ENCODE measurements at regions of chr2 and their contacts with region 1.

Region 1: DNA sequence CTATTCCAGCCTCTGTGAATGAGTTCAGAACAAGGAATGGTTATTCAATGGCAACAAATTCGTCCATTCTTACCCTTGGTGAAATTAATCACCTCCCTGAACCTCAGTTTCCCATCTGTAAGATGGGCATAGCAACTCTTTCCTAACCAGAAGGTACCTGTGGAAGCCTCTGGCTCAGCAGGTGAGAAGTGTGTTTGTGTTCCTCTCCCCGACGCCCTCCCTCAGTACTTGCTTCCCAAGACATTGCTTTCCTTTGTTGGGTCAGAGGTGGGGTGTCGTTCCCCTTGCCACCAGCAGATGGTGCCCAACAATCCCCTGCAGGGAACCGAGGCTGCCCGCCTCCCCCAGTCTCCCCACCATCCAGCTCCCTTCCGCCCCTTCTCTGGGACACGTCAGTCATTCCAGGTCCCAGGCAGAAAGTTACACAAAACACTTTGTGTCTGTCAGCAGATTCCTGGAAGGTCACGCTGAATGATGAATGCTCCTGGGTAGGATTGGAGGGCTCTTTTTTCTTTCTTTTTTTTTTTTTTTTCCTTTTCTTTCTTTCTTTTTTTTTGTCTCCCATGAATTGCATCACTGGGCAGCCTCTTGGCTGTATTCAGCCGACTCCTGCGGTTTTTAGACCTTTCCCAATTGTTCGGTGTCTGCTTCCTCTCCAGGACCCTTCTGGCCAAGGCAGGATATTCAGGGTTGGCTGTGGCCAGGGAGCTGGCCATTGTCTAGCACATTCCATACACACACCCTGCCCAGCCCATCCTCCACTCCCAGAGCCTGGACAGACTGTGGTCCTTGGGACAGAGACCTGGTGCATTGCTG is 117.3 kb downstream of the LPIN1 start:
- DNase-seq: peak; percentile 84 to 89
- ATAC-seq: peak; percentile 91 to 96 (median 94)
- H3K4me3 ChIP-seq: peak overlapping the region in 5 of 10 donors; percentile 11 to 31 (median 16)
- H3K27ac ChIP-seq: peak overlapping the region in 9 of 10 donors; percentile 45 to 77 (median 49)
- H3K4me1 ChIP-seq: peaks cover 0 to 23% (median 13%) of the 10 kb centered on the region in 9 donors
- H3K27me3 ChIP-seq: no peaks in the 10 kb centered on the region
- CTCF ChIP-seq: peak; percentile 91 to 99 (median 97)

Region 2: GRCh38 chr2:11239666-11240462 is 623.9 kb before region 1 on chr2:
- intact Hi-C with region 1: no loop called
- DNase-seq: no peak
- ATAC-seq: peak in 4 of 8 donors; percentile 43 to 67 (median 56)
- H3K4me3 ChIP-seq: no peak overlapping the region
- H3K27ac ChIP-seq: peak overlapping the region in 1 of 10 donors; percentile 0
- H3K4me1 ChIP-seq: peaks cover 0 to 23% (median 13%) of the 10 kb centered on the region in 9 donors
- H3K27me3 ChIP-seq: no peaks in the 10 kb centered on the region
- CTCF ChIP-seq: no peak

Region 3: GRCh38 chr2:11802782-11803191 is 60.9 kb before region 1 on chr2:
- intact Hi-C with region 1: no loop called
- DNase-seq: no peak
- ATAC-seq: peak in 2 of 8 donors; percentile 7 to 15
- H3K4me3 ChIP-seq: no peak overlapping the region
- H3K27ac ChIP-seq: no peak overlapping the region
- H3K4me1 ChIP-seq: peaks cover 0 to 11% (median 4%) of the 10 kb centered on the region in 9 donors
- H3K27me3 ChIP-seq: no peaks in the 10 kb centered on the region
- CTCF ChIP-seq: no peak

Region 4: GRCh38 chr2:11998218-11998617 is 134.5 kb after region 1 on chr2:
- intact Hi-C with region 1: no loop called
- DNase-seq: no peak
- ATAC-seq: no peak
- H3K4me3 ChIP-seq: no peak overlapping the region
- H3K27ac ChIP-seq: no peak overlapping the region
- H3K4me1 ChIP-seq: no peaks in the 10 kb centered on the region
- H3K27me3 ChIP-seq: no peaks in the 10 kb centered on the region
- CTCF ChIP-seq: no peak

Region 5: DNA sequence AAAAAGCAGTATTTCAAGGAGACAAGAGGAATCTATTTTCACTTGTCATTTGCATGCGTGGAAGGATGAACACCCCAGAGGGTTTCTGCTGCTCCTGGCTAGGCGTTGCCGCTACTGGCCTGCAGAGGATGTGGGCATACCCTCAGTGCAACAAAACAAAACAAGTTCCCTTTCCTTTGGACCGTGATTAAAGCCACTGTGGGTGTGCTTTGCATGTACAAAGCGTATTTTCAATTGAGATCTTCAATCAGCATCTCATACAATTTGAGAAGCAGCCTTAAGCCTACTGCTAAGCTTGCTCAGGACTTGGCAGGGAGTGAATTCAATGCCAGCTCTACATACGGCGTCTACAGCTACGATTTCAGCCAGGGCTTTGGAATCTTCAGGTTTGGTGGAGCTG is 181.1 kb after region 1 on chr2:
- intact Hi-C with region 1: loop called in 1 of 10 experiments (anchors 10 kb)
- DNase-seq: no peak
- ATAC-seq: no peak
- H3K4me3 ChIP-seq: no peak overlapping the region
- H3K27ac ChIP-seq: no peak overlapping the region
- H3K4me1 ChIP-seq: peaks cover 0 to 27% (median 0%) of the 10 kb centered on the region in 9 donors
- H3K27me3 ChIP-seq: no peaks in the 10 kb centered on the region
- CTCF ChIP-seq: no peak

Region 6: DNA sequence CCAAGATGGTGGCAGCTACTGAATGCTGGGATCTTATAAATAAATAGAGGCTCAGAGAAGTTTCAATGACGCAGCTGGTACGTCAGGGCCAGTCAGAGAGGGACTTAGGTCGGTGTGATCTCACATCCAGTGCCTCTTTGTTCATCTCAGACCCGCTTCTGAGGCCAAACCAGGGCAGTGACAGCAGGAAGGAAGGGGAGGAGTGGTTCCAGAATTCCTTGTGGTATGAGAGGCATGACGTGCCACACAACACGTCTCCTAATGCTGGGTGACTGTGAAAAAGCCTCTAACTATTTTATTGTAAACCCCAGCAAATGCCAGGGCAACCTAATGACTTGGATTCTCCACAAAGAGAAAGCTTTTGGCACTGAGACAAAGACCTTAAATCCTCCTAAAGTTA is 306.0 kb after region 1 on chr2:
- intact Hi-C with region 1: loop called in 5 of 10 experiments (anchors 5 to 10 kb)
- DNase-seq: peak; percentile 18 to 77
- ATAC-seq: peak; percentile 68 to 94 (median 80)
- H3K4me3 ChIP-seq: no peak overlapping the region
- H3K27ac ChIP-seq: peak overlapping the region in 8 of 10 donors; percentile 34 to 85 (median 62)
- H3K4me1 ChIP-seq: peaks cover 18 to 33% (median 27%) of the 10 kb centered on the region in 9 donors
- H3K27me3 ChIP-seq: no peaks in the 10 kb centered on the region
- CTCF ChIP-seq: no peak

Region 7: DNA sequence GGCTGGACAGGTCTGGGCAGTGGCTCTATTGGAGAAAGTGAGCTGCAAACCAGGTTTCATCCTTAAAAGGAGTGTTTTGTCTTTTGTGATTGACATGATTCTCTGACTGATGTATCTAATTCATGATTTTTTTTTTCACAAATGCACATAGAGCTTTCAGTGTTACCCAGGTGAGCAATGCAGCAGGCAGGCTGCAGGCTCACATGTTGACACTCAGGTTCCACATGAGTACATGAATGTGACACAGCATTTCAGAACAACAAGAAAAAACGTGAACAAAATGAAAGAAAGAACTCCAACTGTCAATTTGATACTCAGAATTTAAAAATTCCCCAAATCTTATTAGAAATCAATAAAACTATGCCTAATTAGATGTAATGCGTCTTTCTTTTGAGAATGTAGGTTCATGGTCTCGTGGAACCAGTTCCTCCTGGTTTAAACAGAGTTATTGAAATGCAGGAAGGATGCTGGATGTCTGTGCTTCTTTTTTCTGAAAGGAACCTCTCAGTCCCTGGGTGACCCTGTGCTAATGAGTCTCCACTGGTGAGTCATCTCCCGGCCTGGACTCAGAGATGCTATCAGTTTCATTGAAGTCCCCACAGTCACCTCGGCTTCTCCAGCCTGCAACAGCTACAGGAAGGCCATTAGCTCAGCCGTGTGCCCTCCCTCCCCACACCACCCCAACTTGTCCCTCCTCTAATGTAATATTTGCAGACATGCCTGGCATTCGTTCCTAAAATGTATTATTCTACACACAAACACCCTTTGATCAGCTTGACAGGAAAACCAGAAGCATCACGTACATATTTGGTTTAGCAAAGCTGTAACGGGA is 313.1 kb after region 1 on chr2:
- intact Hi-C with region 1: loop called in 3 of 10 experiments (anchors 10 kb)
- DNase-seq: peak; percentile 32 to 71
- ATAC-seq: peak; percentile 63 to 95 (median 91)
- H3K4me3 ChIP-seq: no peak overlapping the region
- H3K27ac ChIP-seq: peak overlapping the region in 5 of 10 donors; percentile 10 to 73 (median 48)
- H3K4me1 ChIP-seq: peaks cover 3 to 32% (median 25%) of the 10 kb centered on the region in 9 donors
- H3K27me3 ChIP-seq: no peaks in the 10 kb centered on the region
- CTCF ChIP-seq: no peak

Region 8: DNA sequence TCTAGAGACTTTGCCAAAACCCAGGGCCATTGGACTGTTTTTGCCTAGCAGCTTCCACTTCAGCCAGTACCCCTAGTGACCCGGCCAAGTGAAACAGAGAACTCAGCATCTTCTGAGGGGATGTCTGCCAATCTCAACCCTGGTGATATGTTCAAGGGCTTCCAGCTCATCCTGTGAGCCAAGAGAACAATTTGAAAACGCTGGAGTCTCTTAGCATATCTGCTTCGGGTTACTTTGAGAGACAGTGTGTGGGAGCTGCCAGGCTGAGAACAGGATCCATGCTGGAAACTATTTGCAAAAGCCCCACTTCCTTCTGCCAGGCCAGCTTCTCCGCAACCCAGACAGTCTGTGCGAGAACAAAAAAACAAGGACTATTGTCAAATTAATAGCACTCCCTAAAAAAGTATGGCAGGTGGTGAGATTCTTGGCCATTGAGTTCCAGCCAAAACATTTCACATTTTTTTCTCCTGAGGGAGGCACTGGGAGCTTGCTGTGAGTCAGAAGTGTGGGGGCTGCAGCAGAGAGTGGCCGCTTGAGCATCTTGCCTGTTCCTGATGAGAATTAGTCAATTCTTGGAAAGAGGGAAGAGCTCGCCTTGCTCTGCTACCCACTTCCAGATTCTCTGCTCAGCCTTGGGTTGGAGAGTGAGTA is 457.4 kb after region 1 on chr2:
- intact Hi-C with region 1: loop called in 3 of 10 experiments (anchors 5 to 10 kb)
- DNase-seq: peak; percentile 26 to 36
- ATAC-seq: peak; percentile 66 to 86 (median 78)
- H3K4me3 ChIP-seq: no peak overlapping the region
- H3K27ac ChIP-seq: peak overlapping the region in 4 of 10 donors; percentile 3 to 69 (median 49)
- H3K4me1 ChIP-seq: peaks cover 0 to 28% (median 8%) of the 10 kb centered on the region in 9 donors
- H3K27me3 ChIP-seq: no peaks in the 10 kb centered on the region
- CTCF ChIP-seq: peak in 2 of 9 donors; percentile 11 to 16

Region 9: GRCh38 chr2:12326449-12327190 is 462.9 kb after region 1 on chr2:
- intact Hi-C with region 1: loop called in 3 of 10 experiments (anchors 5 to 10 kb)
- DNase-seq: no peak
- ATAC-seq: peak in 6 of 8 donors; percentile 31 to 72 (median 52)
- H3K4me3 ChIP-seq: no peak overlapping the region
- H3K27ac ChIP-seq: no peak overlapping the region
- H3K4me1 ChIP-seq: peaks cover 0 to 4% (median 0%) of the 10 kb centered on the region in 9 donors
- H3K27me3 ChIP-seq: no peaks in the 10 kb centered on the region
- CTCF ChIP-seq: peak in 7 of 9 donors; percentile 9 to 40 (median 19)